Posterior vena cava (tissue), 2 donors: ENCODE measurements at regions of chr14 and their contacts with region 1.

Region 1: GRCh38 chr14:34470319-34470718 is 8.3 kb upstream of the SPTSSA start:
- DNase-seq: no peak

Region 2: GRCh38 chr14:32950584-32950983 is 1519.7 kb before region 1 on chr14:
- intact Hi-C with region 1: no loop called
- DNase-seq: no peak

Region 3: GRCh38 chr14:33950320-33951182 is 519.8 kb before region 1 on chr14 and contains the start of gene EGLN3:
- intact Hi-C with region 1: loop called in 1 of 2 experiments (anchors 10 kb)
- DNase-seq: peak; percentile 93
- total RNA-seq, gene EGLN3: 15.2 to 29.2 TPM

Region 4: GRCh38 chr14:34404416-34404815 is 65.9 kb before region 1 on chr14:
- intact Hi-C with region 1: no loop called
- DNase-seq: no peak

Region 5: DNA sequence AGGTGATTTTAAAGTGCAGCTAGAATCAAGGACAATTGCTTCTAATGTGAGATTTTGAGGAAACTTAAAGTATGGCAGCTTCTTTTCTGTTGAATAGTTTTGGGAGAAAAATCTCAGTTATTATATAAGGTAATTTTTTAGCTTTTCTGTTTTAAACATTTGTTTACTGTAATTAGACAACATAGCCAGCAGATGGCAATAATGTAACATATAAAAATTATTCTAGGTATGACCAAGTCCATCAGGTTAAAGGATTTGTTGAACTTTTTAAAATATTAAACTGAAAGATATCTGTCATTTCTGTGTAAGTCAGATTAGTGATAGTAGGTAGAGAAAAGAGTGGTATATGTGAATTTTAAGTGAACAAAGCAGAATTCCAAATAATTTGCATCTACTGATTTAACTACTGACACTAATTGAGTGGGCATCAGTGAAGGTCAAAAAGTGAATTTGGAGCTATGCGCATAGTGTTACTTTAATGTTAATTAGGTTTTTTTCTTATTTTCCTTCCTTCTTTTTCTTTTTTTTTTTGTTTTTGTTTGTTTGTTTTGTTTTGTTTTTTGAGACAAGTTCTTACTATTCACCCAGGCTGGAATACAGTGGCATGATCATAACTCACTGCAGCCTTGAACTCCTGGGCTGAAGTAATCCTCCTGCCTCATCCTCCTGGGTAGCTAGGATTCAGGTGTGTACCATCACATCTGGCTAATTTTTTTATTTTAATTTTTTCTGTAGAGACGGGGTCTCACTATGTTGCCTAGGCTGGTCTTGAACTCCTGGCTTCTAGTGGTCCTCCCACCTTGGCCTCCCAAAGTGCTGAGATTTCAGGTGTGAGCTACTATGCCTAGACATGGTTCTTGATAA is 670.6 kb after region 1 on chr14:
- intact Hi-C with region 1: no loop called
- DNase-seq: no peak

Region 6: DNA sequence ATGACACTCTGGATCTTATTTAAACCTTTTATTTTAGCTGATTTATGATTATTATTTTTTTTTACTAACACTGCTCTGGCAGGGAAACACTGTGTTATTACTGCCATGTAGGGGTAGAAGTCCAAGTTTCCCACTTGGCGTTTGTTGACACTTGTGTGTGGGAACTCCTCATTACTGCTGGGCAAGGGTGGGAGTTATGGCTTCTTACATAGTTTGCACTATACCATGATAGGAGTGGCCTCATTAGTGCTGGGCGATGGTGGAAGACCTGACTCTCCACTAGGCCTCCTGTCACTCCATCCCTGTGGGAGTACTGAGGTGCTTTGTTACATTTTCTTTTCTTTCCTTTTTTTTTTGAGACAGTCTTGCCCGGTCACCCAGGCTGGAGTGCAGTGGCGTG is 1439.3 kb after region 1 on chr14:
- intact Hi-C with region 1: no loop called
- DNase-seq: no peak